Caco-2 (cell line): ENCODE measurements at regions of chr11 and their contacts with region 1.

Region 1: GRCh38 chr11:83713701-83714100 is 427.5 kb upstream of the CCDC90B start:
- DNase-seq: no peak
- H3K4me3 ChIP-seq: no peak overlapping the region
- H3K4me3 Mint-ChIP-seq: no peak overlapping the region
- H3K27ac Mint-ChIP-seq: peak overlapping the region; percentile 69
- H3K4me1 ChIP-seq: peaks cover 62% of the 10 kb centered on the region
- H3K4me1 Mint-ChIP-seq: peaks cover 64% of the 10 kb centered on the region
- H3K27me3 ChIP-seq: no peaks in the 10 kb centered on the region
- H3K27me3 Mint-ChIP-seq: no peaks in the 10 kb centered on the region
- CTCF ChIP-seq: no peak

Region 2: DNA sequence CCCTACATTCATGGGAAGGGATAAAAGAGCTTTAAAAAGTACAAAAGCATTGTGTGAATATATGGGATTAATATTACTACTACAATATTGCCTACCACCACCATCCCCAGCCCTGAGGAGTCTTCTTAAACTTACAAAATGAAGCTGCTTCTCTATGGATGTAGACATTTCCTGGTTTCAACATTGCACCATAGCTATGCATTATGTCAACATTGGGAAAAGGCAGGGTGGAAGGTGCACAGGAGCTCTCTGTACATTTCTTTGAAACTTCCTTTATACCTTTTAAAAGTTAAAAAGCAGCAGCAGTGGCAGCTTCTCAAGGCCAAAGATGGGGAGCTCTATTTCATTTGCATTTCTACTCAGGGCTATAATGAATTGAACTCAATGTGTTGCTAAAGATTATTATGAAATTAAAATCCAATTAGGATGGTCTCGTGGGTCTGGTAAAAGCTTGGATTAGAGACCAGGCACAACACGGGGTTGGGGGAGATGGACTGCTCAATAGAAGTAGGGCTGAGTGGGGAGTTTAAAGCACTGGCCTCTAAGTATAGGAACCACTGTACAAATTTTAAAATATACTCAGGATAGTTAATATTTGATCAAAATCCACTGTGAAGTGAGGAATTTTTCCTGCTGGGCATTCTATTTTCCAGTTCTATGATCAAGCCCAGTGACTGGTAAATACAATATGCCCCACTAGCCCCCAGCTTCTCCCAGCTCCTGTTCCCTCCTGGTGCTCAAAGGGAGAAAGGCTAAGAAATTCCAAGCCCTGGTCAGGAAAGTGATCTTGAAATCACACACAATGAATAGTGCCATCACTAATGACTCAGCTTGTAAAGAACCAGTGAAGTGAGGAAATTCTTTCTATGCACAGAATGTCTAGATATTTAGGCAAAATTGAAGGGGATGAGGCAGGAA is 64.8 kb before region 1 on chr11:
- CTCF ChIA-PET with region 1: interaction called, 11 read pairs
- POLR2A ChIA-PET with region 1: interaction called, 3 read pairs
- intact Hi-C with region 1: loop called (anchors 1 kb)
- DNase-seq: peak in 1 of 2 experiments; percentile 65
- H3K4me3 ChIP-seq: no peak overlapping the region
- H3K4me3 Mint-ChIP-seq: peak overlapping the region; percentile 20
- H3K27ac Mint-ChIP-seq: peak overlapping the region; percentile 65
- H3K4me1 ChIP-seq: peaks cover 31% of the 10 kb centered on the region
- H3K4me1 Mint-ChIP-seq: peaks cover 18% of the 10 kb centered on the region
- H3K27me3 ChIP-seq: no peaks in the 10 kb centered on the region
- H3K27me3 Mint-ChIP-seq: no peaks in the 10 kb centered on the region
- CTCF ChIP-seq: no peak

Region 3: GRCh38 chr11:83663446-83663845 is 50.3 kb before region 1 on chr11:
- CTCF ChIA-PET with region 1: no interaction called
- POLR2A ChIA-PET with region 1: no interaction called
- intact Hi-C with region 1: loop called (anchors 2 kb)
- DNase-seq: no peak
- H3K4me3 ChIP-seq: no peak overlapping the region
- H3K4me3 Mint-ChIP-seq: no peak overlapping the region
- H3K27ac Mint-ChIP-seq: no peak overlapping the region
- H3K4me1 ChIP-seq: peaks cover 23% of the 10 kb centered on the region
- H3K4me1 Mint-ChIP-seq: peaks cover 20% of the 10 kb centered on the region
- H3K27me3 ChIP-seq: no peaks in the 10 kb centered on the region
- H3K27me3 Mint-ChIP-seq: no peaks in the 10 kb centered on the region
- CTCF ChIP-seq: no peak

Region 4: DNA sequence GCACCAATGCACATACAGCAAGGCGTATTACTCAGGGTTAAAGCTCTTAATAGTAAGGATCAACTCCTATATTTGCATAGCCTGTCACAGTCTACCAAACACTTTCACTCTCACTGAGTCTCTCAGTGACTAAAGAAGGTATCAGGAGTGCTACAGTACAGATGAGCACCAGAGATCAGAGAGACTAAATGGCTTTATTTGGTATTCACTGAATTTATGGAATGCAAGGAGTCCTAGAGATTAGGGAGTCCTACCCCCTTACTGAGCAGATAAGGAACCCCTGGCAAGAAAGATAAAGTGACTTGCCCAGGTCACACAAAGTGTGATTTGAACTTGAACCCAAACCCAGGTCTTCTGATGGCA is 31.1 kb before region 1 on chr11:
- CTCF ChIA-PET with region 1: interaction called, 8 read pairs
- POLR2A ChIA-PET with region 1: interaction called, 7 read pairs
- intact Hi-C with region 1: loop called (anchors 1 kb)
- DNase-seq: peak; percentile 44 to 51
- H3K4me3 ChIP-seq: no peak overlapping the region
- H3K4me3 Mint-ChIP-seq: no peak overlapping the region
- H3K27ac Mint-ChIP-seq: no peak overlapping the region
- H3K4me1 ChIP-seq: peaks cover 51% of the 10 kb centered on the region
- H3K4me1 Mint-ChIP-seq: peaks cover 33% of the 10 kb centered on the region
- H3K27me3 ChIP-seq: no peaks in the 10 kb centered on the region
- H3K27me3 Mint-ChIP-seq: no peaks in the 10 kb centered on the region
- CTCF ChIP-seq: no peak

Region 5: GRCh38 chr11:83691451-83691950 is 22.2 kb before region 1 on chr11:
- CTCF ChIA-PET with region 1: interaction called, 3 read pairs
- POLR2A ChIA-PET with region 1: interaction called, 3 read pairs
- intact Hi-C with region 1: loop called (anchors 1 kb)
- DNase-seq: peak; percentile 39 to 44
- H3K4me3 ChIP-seq: no peak overlapping the region
- H3K4me3 Mint-ChIP-seq: peak overlapping the region; percentile 16
- H3K27ac Mint-ChIP-seq: peak overlapping the region; percentile 11
- H3K4me1 ChIP-seq: peaks cover 40% of the 10 kb centered on the region
- H3K4me1 Mint-ChIP-seq: peaks cover 29% of the 10 kb centered on the region
- H3K27me3 ChIP-seq: no peaks in the 10 kb centered on the region
- H3K27me3 Mint-ChIP-seq: no peaks in the 10 kb centered on the region
- CTCF ChIP-seq: no peak

Region 6: DNA sequence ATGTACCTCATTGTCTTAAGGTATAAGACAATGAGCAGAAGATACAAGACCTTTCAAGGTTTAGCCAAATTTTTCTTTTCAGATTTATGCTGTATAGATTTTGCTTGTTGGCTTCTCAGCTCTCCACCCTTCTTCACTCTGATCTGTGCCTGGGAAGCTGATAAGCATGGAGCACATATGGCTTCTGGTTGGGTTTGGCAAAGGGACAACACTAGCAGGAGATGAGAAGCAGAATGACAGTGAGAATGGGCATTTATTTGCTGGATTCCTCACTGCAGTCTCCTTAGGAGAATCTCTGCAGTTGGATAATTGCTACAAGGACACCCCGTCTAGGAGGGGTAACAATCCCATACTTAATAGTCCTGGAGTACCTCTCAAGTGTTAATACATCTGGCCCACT is 47.2 kb after region 1 on chr11:
- CTCF ChIA-PET with region 1: no interaction called
- POLR2A ChIA-PET with region 1: no interaction called
- intact Hi-C with region 1: no loop called
- DNase-seq: no peak
- H3K4me3 ChIP-seq: no peak overlapping the region
- H3K4me3 Mint-ChIP-seq: no peak overlapping the region
- H3K27ac Mint-ChIP-seq: no peak overlapping the region
- H3K4me1 ChIP-seq: no peaks in the 10 kb centered on the region
- H3K4me1 Mint-ChIP-seq: no peaks in the 10 kb centered on the region
- H3K27me3 ChIP-seq: no peaks in the 10 kb centered on the region
- H3K27me3 Mint-ChIP-seq: peaks cover 16% of the 10 kb centered on the region
- CTCF ChIP-seq: no peak

Region 7: DNA sequence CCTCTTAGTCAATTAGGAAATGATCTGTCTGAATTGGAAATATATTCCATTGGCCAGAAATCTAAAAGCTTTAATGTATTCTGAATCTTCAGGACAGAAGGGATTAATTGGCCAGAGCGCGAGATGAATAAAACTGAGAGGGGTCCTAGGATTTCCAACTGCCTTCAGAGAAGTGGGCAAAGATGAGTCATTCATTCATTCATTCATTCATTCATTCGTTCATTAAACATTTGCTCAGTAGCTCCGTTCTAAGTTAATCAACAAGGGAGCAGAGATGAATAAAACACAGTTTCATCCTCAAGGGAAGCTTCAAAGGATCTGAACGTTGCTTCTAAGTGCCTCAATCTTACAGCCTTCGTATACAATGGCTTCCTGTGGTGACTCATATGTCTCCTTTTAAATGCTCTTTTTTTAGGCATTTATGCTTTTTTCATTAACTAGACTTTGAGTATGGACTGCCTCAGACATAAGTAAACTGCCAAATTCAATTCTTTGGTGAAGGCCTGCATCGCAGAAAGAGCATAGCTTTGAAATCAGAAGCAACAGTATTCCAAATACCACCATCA is 109.8 kb after region 1 on chr11:
- CTCF ChIA-PET with region 1: no interaction called
- POLR2A ChIA-PET with region 1: no interaction called
- intact Hi-C with region 1: no loop called
- DNase-seq: no peak
- H3K4me3 ChIP-seq: no peak overlapping the region
- H3K4me3 Mint-ChIP-seq: no peak overlapping the region
- H3K27ac Mint-ChIP-seq: no peak overlapping the region
- H3K4me1 ChIP-seq: no peaks in the 10 kb centered on the region
- H3K4me1 Mint-ChIP-seq: no peaks in the 10 kb centered on the region
- H3K27me3 ChIP-seq: no peaks in the 10 kb centered on the region
- H3K27me3 Mint-ChIP-seq: peaks cover 11% of the 10 kb centered on the region
- CTCF ChIP-seq: no peak